ENCODE measurements at regions of chr2 and their contacts with region 1.

Region 1: DNA sequence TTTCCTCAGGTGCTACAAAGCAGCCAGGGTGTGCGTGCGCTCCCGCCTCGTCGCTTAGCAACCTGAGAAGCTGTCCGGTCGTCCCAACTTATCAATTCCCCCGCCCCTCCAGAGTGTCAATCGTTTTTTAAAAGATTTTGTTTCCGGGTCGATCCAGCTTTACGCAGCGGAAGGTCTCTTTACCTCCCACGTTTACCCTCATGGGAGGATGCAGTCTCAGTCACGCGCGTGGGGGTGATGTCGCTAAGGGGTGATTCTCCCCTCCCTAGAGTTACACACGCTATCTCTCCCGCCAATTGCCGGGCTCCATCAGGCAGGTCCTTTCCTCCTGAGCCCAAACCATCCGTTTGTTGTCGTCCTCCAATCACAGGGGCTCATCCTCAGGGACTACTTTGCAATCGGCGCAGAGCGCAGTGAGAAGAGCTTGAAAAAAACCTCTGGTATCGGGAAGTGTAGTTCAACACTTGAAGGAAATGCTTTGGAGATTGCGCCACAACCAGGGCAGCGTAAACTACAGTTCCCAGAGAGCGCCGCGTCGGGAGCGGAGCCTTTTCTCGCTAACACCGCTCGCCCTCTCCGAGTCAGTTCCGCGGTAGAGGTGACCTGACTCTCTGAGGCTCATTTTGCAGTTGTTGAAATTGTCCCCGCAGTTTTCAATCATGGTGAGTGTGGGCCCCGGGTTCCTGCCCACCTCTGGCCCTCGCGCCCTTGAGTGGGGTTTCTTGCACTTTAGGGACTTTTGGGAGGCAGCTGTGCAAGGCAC is at the starts of genes MDH1 and WDPCP:
- DNase-seq: peak; percentile 96
- ATAC-seq: peak; percentile 92
- H3K4me3 Mint-ChIP-seq: peak within 1 kb of the TSS; percentile 100
- H3K27ac Mint-ChIP-seq: peak within 1 kb of the TSS; percentile 97
- H3K4me1 Mint-ChIP-seq: peaks cover 36% of the 10 kb centered on the region
- H3K27me3 Mint-ChIP-seq: no peaks in the 10 kb centered on the region
- total RNA-seq, gene MDH1: 212 to 265 TPM
- total RNA-seq, gene WDPCP: 6.5 to 8.2 TPM

Region 2: DNA sequence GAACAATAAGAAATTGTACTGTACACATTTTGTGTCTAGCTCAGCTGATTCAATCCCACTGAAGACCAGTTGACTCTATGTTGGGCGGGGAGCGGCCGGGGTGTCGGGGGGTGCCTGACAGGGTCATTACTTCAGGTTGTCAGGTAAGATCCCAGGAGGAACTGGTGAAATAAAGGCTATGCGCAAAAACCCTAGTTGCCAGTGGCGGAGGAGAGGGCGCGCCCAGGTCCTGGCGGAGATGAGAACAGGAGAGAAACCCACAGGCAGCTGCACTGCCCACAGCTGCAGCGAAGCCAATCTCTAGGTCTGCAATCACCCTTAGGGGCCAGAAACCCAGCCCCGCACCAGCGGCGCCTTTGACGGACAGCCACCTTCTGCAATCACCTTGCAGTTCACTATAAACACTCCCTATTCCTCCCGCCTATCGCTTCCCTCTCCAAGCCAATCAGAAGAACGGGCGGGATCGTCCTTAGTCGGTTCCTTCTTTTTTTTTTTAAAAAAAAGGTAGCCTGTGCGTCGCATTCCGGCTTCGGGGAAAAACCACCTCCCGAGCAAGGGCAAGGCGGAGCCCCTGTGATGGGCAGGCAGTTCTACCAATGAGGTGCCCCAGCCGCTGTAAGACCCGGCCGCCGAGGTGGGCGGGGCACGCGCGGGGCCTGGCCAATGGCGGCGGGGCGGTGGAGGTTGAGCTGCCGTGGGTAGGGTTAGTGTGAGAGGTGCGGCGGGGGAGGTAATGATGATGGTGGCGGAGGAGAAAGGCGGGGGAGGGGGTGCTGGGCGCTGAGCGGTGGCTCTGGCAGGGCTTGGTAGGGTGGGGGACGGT is 883.3 kb before region 1 on chr2 and contains the start of gene EHBP1:
- CTCF ChIA-PET with region 1: no interaction called
- POLR2A ChIA-PET with region 1: no interaction called
- intact Hi-C with region 1: loop called (anchors 1 kb)
- DNase-seq: peak; percentile 99
- ATAC-seq: peak; percentile 95
- H3K4me3 Mint-ChIP-seq: peak within 1 kb of the TSS; percentile 79
- H3K27ac Mint-ChIP-seq: peak within 1 kb of the TSS; percentile 83
- H3K4me1 Mint-ChIP-seq: peaks cover 31% of the 10 kb centered on the region
- H3K27me3 Mint-ChIP-seq: no peaks in the 10 kb centered on the region
- total RNA-seq, gene EHBP1: 27.3 to 28.5 TPM

Region 3: DNA sequence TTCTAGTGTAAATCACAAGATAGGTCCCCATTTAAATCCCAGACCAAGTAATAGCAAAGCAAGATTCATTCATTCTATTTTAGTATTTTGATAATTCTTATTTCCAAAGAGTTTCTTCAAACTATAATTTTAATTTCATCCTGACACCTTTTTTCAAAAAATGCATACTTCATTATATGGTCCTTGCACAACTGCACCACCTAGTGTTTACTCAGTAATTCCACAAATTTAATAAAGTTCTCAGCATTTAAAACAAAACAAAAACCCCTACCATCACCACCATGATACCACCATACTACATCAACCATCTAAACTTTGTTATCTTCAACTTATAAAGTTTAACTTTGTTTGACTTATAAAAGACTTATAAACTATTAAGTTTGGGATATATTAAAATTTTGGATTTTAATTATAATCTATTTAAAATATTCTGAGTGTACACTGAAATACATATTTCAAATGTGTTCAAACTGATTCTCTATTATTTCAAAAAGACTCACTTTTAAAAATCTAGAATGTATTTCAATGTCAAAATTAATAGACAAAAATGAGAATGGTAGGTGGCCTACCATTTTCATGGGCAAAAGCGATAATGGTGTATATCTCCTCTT is 44.4 kb before region 1 on chr2:
- CTCF ChIA-PET with region 1: no interaction called
- POLR2A ChIA-PET with region 1: no interaction called
- intact Hi-C with region 1: no loop called
- DNase-seq: no peak
- ATAC-seq: no peak
- H3K4me3 Mint-ChIP-seq: no peak overlapping the region
- H3K27ac Mint-ChIP-seq: no peak overlapping the region
- H3K4me1 Mint-ChIP-seq: no peaks in the 10 kb centered on the region
- H3K27me3 Mint-ChIP-seq: no peaks in the 10 kb centered on the region

Region 4: GRCh38 chr2:63628403-63628942 is 39.9 kb after region 1 on chr2:
- CTCF ChIA-PET with region 1: no interaction called
- POLR2A ChIA-PET with region 1: no interaction called
- intact Hi-C with region 1: no loop called
- DNase-seq: no peak
- ATAC-seq: no peak
- H3K4me3 Mint-ChIP-seq: no peak overlapping the region
- H3K27ac Mint-ChIP-seq: no peak overlapping the region
- H3K4me1 Mint-ChIP-seq: peaks cover 4% of the 10 kb centered on the region
- H3K27me3 Mint-ChIP-seq: peaks cover 7% of the 10 kb centered on the region

Region 5: DNA sequence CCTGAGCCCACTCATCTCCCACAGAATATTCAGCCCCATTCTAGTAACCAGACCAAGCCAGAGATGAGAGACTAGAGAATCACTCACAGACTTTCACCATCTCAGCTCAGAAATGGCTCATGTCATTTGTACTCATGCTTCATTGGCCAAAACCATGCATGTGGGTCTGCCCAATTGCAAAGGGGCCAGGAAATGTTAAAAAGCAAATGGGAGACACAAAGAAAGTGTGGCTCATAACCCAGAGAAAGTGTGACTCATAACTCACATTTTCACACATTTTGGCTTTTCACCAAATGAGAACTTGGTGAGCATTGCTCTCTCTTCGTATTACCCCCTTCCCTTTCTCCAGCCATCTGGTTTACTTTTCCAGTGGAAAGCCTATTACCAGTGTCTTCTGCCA is 66.4 kb after region 1 on chr2:
- CTCF ChIA-PET with region 1: no interaction called
- POLR2A ChIA-PET with region 1: interaction called, 6 read pairs
- intact Hi-C with region 1: loop called in 1 of 2 experiments (anchors 2 kb)
- DNase-seq: peak; percentile 62
- ATAC-seq: peak; percentile 99
- H3K4me3 Mint-ChIP-seq: no peak overlapping the region
- H3K27ac Mint-ChIP-seq: no peak overlapping the region
- H3K4me1 Mint-ChIP-seq: peaks cover 6% of the 10 kb centered on the region
- H3K27me3 Mint-ChIP-seq: peaks cover 4% of the 10 kb centered on the region

Region 6: DNA sequence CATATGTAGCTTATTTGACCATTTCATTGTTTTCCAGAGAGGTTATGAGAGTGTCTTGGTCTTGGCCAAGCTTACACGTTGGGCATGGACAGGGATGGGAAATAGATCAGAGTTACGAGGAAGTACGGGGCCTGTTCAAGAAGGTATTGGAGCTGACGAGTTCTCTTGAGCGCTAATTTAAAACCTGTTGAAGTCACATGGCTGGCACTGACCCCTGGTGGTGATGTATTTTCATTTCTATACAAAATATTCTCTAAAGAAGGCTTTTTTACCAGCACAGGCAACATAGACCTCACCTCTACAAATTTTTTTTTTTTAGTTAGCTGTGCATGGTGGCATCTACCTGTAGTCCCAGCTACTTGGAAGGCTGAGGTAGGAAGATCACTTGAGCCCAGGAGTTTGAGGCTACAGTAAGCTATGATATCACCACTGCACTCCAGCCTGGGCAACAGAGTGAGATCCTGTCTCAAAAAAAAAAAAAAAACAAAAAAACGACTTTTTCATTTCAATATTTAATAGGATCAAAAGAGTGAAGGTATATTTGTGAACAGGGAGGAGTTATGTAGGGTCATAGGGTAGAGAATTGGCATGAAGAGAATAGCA is 272.8 kb after region 1 on chr2:
- CTCF ChIA-PET with region 1: interaction called, 4 read pairs
- POLR2A ChIA-PET with region 1: interaction called, 3 read pairs
- intact Hi-C with region 1: loop called (anchors 5 kb)
- DNase-seq: peak; percentile 73
- ATAC-seq: peak; percentile 39
- H3K4me3 Mint-ChIP-seq: no peak overlapping the region
- H3K27ac Mint-ChIP-seq: no peak overlapping the region
- H3K4me1 Mint-ChIP-seq: peaks cover 43% of the 10 kb centered on the region
- H3K27me3 Mint-ChIP-seq: no peaks in the 10 kb centered on the region

Region 7: DNA sequence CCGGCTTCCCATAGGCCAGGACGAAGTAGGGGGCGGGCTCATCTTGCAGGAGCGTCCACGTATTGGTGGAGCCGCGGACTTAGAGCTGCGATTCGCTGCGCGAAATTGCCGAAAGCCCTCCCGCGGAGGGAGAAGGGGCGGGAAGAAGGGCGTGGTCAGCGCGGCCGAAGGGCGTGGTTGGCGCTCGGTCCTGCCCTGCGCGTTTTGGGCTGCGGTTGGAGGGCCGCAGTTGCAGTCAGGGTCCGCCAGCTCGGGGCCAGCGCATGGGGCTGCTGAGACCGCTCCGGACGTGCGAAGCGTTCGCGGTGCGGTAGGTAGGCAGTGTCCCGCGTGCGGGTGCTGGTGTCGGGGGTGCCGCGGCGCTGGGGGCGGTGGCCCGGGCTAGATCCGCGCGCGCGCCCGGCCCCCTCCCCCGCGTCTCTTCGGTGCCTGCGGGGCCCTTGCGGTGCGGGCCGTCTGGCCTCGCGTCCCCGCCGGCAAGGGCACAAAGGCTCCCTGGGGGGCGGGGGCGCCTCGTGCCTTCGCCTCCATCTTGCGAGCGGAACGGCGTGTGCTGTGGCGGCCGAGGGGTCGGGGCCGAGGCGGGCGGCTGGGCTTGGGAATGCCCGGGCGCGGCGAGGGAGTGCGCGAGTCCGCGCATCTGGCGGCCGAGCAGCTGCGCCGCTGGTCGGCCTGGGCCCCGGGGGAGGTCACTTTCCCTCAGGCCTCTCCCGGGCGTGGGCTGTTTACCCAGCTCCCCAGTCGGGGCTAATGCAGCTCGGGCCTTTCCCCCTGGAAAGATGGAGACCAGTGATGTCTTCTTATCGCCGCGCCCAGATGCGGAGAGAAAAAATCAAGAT is 1467.9 kb after region 1 on chr2 and contains the start of gene CEP68:
- CTCF ChIA-PET with region 1: no interaction called
- POLR2A ChIA-PET with region 1: no interaction called
- intact Hi-C with region 1: loop called in 1 of 2 experiments (anchors 1 kb)
- DNase-seq: peak; percentile 98
- ATAC-seq: peak; percentile 94
- H3K4me3 Mint-ChIP-seq: peak within 1 kb of the TSS; percentile 93
- H3K27ac Mint-ChIP-seq: peak within 1 kb of the TSS; percentile 84
- H3K4me1 Mint-ChIP-seq: peaks cover 55% of the 10 kb centered on the region
- H3K27me3 Mint-ChIP-seq: no peaks in the 10 kb centered on the region
- total RNA-seq, gene CEP68: 4.9 to 6.0 TPM